Panc1 (cell line): ENCODE measurements at regions of chr17 and their contacts with region 1.

Region 1: GRCh38 chr17:35666967-35667532 is 64.4 kb upstream of the RASL10B start:
- DNase-seq: no peak
- ATAC-seq: no peak
- H3K4me3 ChIP-seq: no peak overlapping the region
- H3K27ac ChIP-seq: no peak overlapping the region
- H3K4me1 ChIP-seq: no peaks in the 10 kb centered on the region
- H3K27me3 ChIP-seq: no peaks in the 10 kb centered on the region
- CTCF ChIP-seq: no peak

Region 2: GRCh38 chr17:35568541-35568940 is 98.5 kb before region 1 on chr17:
- CTCF ChIA-PET with region 1: no interaction called
- POLR2A ChIA-PET with region 1: no interaction called
- in situ Hi-C with region 1: no loop called
- intact Hi-C with region 1: no loop called
- DNase-seq: no peak
- ATAC-seq: peak; percentile 74
- H3K4me3 ChIP-seq: peak overlapping the region; percentile 96 to 98
- H3K27ac ChIP-seq: peak overlapping the region; percentile 97
- H3K4me1 ChIP-seq: peaks cover 12% of the 10 kb centered on the region
- H3K27me3 ChIP-seq: no peaks in the 10 kb centered on the region
- CTCF ChIP-seq: no peak

Region 3: GRCh38 chr17:35612924-35613521 is 54.0 kb before region 1 on chr17:
- CTCF ChIA-PET with region 1: no interaction called
- POLR2A ChIA-PET with region 1: no interaction called
- in situ Hi-C with region 1: no loop called
- intact Hi-C with region 1: loop called (anchors 10 kb)
- DNase-seq: no peak
- ATAC-seq: peak; percentile 78
- H3K4me3 ChIP-seq: no peak overlapping the region
- H3K27ac ChIP-seq: no peak overlapping the region
- H3K4me1 ChIP-seq: 0 out of 2 replicates have a peak, but pooled peaks cover under 1% of the 10 kb centered on the region
- H3K27me3 ChIP-seq: no peaks in the 10 kb centered on the region
- CTCF ChIP-seq: peak; percentile 77; the same call in 1 of the 2 replicates